PC-3 (cell line): ENCODE measurements at regions of chr17 and their contacts with region 1.

Region 1: GRCh38 chr17:38421871-38422827 is 6.1 kb upstream of the ARHGAP23 start:
- DNase-seq: no peak
- ATAC-seq: no peak
- H3K4me3 ChIP-seq: no peak overlapping the region
- H3K27ac ChIP-seq: no peak overlapping the region
- H3K4me1 ChIP-seq: no peaks in the 10 kb centered on the region
- H3K27me3 ChIP-seq: peaks cover 11% of the 10 kb centered on the region
- CTCF ChIP-seq: no peak

Region 2: GRCh38 chr17:38434178-38434665 is 12.1 kb after region 1 on chr17:
- CTCF ChIA-PET with region 1: no interaction called
- POLR2A ChIA-PET with region 1: no interaction called
- intact Hi-C with region 1: no loop called
- DNase-seq: no peak
- ATAC-seq: no peak
- H3K4me3 ChIP-seq: no peak overlapping the region
- H3K27ac ChIP-seq: no peak overlapping the region
- H3K4me1 ChIP-seq: peaks cover 1% of the 10 kb centered on the region; the same call in 1 of the 2 replicates
- H3K27me3 ChIP-seq: no peaks in the 10 kb centered on the region
- CTCF ChIP-seq: no peak

Region 3: DNA sequence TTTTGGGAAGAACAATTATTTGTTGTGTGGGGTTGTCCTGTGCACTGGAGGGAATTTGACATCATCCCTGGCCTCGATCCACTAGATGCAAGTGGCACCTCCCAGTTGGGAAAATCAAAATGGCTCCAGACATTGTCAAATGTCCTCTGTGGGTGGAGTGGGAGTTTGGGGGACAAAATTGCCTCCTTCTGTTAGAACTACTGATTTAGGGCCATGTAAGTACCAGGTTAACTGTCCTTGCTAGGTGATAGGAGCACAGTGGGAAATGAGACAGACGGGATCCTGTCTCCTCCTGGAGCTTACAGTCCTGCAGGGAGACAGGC is 63.0 kb after region 1 on chr17:
- CTCF ChIA-PET with region 1: no interaction called
- POLR2A ChIA-PET with region 1: no interaction called
- intact Hi-C with region 1: loop called (anchors 2 kb)
- DNase-seq: no peak
- ATAC-seq: no peak
- H3K4me3 ChIP-seq: no peak overlapping the region
- H3K27ac ChIP-seq: no peak overlapping the region
- H3K4me1 ChIP-seq: no peaks in the 10 kb centered on the region
- H3K27me3 ChIP-seq: no peaks in the 10 kb centered on the region
- CTCF ChIP-seq: no peak

Region 4: GRCh38 chr17:38498186-38498752 is 76.1 kb after region 1 on chr17:
- CTCF ChIA-PET with region 1: no interaction called
- POLR2A ChIA-PET with region 1: no interaction called
- intact Hi-C with region 1: loop called (anchors 2 kb)
- DNase-seq: no peak
- ATAC-seq: no peak
- H3K4me3 ChIP-seq: no peak overlapping the region
- H3K27ac ChIP-seq: no peak overlapping the region
- H3K4me1 ChIP-seq: no peaks in the 10 kb centered on the region
- H3K27me3 ChIP-seq: no peaks in the 10 kb centered on the region
- CTCF ChIP-seq: no peak

Region 5: DNA sequence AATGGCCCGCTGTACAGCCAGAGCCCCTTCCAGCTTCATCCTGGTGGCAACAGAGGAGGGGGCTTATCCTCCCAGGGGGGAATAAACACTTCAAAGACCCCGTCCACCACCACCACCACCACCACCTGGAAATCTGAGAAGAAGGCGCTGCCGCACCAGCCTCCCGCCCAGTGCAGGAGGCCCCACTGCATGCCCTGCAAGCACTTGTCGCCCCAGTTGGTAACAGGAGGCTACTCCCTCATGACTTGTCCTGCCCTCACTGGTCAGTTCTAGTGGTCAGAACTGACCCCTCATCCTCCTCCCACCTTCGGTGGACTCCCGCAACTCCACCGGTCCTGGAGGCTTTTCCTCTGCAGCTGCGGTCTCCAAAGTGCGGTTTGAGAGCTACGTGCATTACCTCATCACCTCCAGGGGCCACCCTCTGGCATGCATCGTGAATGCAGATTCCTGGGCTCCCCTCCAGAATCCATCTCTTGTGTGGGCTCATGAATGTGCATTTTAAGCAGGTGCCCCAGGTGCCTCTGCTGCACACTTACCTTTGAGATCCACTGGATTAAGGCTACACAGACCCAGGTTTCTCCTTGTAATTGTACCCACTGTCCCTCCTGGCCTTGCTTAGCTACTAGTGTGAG is 111.8 kb after region 1 on chr17:
- CTCF ChIA-PET with region 1: no interaction called
- POLR2A ChIA-PET with region 1: no interaction called
- intact Hi-C with region 1: no loop called
- DNase-seq: no peak
- ATAC-seq: no peak
- H3K4me3 ChIP-seq: no peak overlapping the region
- H3K27ac ChIP-seq: no peak overlapping the region
- H3K4me1 ChIP-seq: no peaks in the 10 kb centered on the region; the same call in 1 of the 2 replicates
- H3K27me3 ChIP-seq: no peaks in the 10 kb centered on the region
- CTCF ChIP-seq: no peak

Region 6: GRCh38 chr17:39393736-39394135 is 971.6 kb after region 1 on chr17:
- CTCF ChIA-PET with region 1: no interaction called
- POLR2A ChIA-PET with region 1: no interaction called
- intact Hi-C with region 1: no loop called
- DNase-seq: no peak
- ATAC-seq: no peak
- H3K4me3 ChIP-seq: no peak overlapping the region
- H3K27ac ChIP-seq: no peak overlapping the region
- H3K4me1 ChIP-seq: no peaks in the 10 kb centered on the region
- H3K27me3 ChIP-seq: no peaks in the 10 kb centered on the region
- CTCF ChIP-seq: no peak